Activated CD8-positive, alpha-beta T cell treated with anti-CD3 and anti-CD28 coated beads for 36 hours (primary cell): ENCODE measurements at regions of chrX and their contacts with region 1.

Region 1: DNA sequence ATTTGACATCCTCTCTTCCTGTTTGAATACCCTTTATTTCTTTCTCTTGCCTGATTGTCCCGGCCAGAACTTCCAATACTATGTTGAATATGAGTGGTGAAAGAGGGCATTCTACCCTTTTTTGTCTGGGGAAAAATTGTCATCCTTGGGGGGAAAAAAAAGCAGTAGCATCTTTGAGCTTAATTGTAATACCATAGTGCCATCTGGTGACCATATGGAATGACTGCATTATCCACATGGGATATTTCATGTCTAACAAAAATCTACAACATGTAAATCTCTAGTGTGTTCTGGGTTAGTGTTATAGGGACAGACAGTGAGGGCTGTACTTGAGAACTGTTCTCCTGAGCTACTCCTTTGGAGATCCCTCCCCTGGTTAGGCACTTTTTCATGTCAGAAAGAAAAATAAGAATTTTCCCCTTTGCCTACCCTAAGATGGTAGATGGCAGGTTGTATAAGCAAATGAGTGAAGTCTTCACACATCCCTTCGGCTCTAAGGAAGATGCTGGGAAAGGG is 26.0 kb downstream of the CAPN6 start:
- DNase-seq: no peak
- ATAC-seq: no peak
- H3K4me3 Mint-ChIP-seq: no peak overlapping the region
- H3K27ac Mint-ChIP-seq: no peak overlapping the region
- H3K4me1 Mint-ChIP-seq: no peaks in the 10 kb centered on the region
- H3K27me3 Mint-ChIP-seq: no peaks in the 10 kb centered on the region
- CTCF ChIP-seq: no peak

Region 2: DNA sequence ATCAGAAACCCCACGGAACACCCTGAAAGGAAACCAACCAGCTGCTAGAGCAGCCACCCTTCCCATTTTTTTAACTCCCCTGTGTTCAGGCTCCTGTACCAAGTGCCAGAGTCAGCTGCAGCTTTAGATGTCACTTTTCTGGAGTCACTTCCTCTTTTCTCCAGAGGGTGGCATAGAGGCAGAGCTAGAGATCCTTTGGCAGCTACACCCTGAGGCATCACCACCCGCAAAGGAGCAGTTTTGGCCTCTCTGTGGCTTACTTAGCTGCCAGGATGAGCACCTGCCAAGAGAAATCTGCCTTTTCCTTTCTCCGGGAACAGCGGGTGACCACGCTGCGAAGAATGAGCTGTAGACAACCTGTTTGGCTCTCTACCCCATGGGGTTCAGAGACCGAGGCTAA is 390.7 kb before region 1 on chrX:
- CTCF ChIA-PET with region 1: interaction called, 4 read pairs
- POLR2A ChIA-PET with region 1: no interaction called
- intact Hi-C with region 1: loop called (anchors 5 kb)
- DNase-seq: peak; percentile 1
- ATAC-seq: no peak
- H3K4me3 Mint-ChIP-seq: no peak overlapping the region
- H3K27ac Mint-ChIP-seq: no peak overlapping the region
- H3K4me1 Mint-ChIP-seq: no peaks in the 10 kb centered on the region
- H3K27me3 Mint-ChIP-seq: peaks cover 4% of the 10 kb centered on the region
- CTCF ChIP-seq: no peak

Region 3: DNA sequence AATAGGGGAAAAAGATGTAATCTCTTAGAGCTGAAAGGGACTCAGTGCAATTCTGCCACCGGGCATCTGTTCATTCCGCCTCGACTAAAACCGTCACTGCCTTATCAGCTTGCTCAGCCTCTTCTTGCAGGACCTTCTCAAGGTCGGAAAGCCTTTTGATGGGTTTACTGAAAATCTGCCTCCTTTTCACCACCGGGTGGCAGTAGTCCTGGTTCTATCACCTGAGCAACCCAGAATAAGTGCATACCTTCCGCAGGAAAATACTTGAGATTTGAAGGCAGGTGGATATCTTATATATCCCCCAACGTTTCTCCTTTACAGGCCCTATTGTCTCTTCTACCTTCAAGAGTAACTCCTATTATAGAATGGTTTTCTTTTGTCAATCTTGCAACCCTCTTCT is 251.7 kb before region 1 on chrX:
- CTCF ChIA-PET with region 1: interaction called, 3 read pairs
- POLR2A ChIA-PET with region 1: no interaction called
- intact Hi-C with region 1: loop called (anchors 5 kb)
- DNase-seq: peak; percentile 34
- ATAC-seq: no peak
- H3K4me3 Mint-ChIP-seq: no peak overlapping the region
- H3K27ac Mint-ChIP-seq: no peak overlapping the region
- H3K4me1 Mint-ChIP-seq: no peaks in the 10 kb centered on the region
- H3K27me3 Mint-ChIP-seq: peaks cover 2% of the 10 kb centered on the region
- CTCF ChIP-seq: peak; percentile 21

Region 4: GRCh38 chrX:111098874-111099273 is 145.4 kb before region 1 on chrX:
- CTCF ChIA-PET with region 1: interaction called, 8 read pairs
- POLR2A ChIA-PET with region 1: no interaction called
- intact Hi-C with region 1: loop called (anchors 10 kb)
- DNase-seq: peak; percentile 66
- ATAC-seq: peak; percentile 82
- H3K4me3 Mint-ChIP-seq: no peak overlapping the region
- H3K27ac Mint-ChIP-seq: no peak overlapping the region
- H3K4me1 Mint-ChIP-seq: peaks cover 12% of the 10 kb centered on the region
- H3K27me3 Mint-ChIP-seq: peaks cover 14% of the 10 kb centered on the region
- CTCF ChIP-seq: peak; percentile 61

Region 5: GRCh38 chrX:111284631-111285293 is 40.5 kb after region 1 on chrX:
- CTCF ChIA-PET with region 1: no interaction called
- POLR2A ChIA-PET with region 1: no interaction called
- intact Hi-C with region 1: no loop called
- DNase-seq: no peak
- ATAC-seq: no peak
- H3K4me3 Mint-ChIP-seq: no peak overlapping the region
- H3K27ac Mint-ChIP-seq: no peak overlapping the region
- H3K4me1 Mint-ChIP-seq: no peaks in the 10 kb centered on the region
- H3K27me3 Mint-ChIP-seq: no peaks in the 10 kb centered on the region
- CTCF ChIP-seq: no peak